AG04450 (cell line): ENCODE measurements at regions of chr9 and their contacts with region 1.

Region 1: DNA sequence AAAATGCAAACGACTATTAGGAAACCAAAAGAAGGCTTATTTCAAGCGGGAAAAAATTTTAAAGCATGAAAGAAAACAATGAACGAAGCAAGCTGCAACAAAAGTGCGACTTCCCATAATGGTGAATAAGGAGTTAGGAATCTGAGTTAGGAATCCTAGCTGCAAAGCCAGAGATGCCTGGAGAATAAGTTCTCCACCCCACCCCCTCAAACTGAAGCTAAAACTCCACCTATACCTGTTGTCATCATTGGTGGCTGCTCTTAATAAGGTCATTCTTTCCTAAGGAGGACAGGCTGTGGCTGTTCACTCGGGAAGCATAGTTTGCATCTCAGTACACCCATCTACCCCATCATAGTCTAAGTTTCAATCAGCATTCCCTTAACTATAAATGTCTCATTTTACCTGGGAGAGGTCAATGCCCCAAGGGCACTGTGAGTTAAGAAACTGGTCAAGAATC is 147.2 kb downstream of the GNAQ start:
- DNase-seq: no peak
- H3K4me3 ChIP-seq: no peak overlapping the region
- H3K27ac ChIP-seq: no peak overlapping the region
- H3K27me3 ChIP-seq: no peaks in the 10 kb centered on the region
- CTCF ChIP-seq: no peak

Region 2: GRCh38 chr9:77374266-77374665 is 510.2 kb before region 1 on chr9:
- CTCF ChIA-PET with region 1: no interaction called
- POLR2A ChIA-PET with region 1: no interaction called
- DNase-seq: no peak
- H3K4me3 ChIP-seq: no peak overlapping the region
- H3K27ac ChIP-seq: no peak overlapping the region
- H3K27me3 ChIP-seq: no peaks in the 10 kb centered on the region
- CTCF ChIP-seq: no peak

Region 3: GRCh38 chr9:77769246-77769645 is 115.2 kb before region 1 on chr9:
- CTCF ChIA-PET with region 1: no interaction called
- POLR2A ChIA-PET with region 1: no interaction called
- DNase-seq: no peak
- H3K4me3 ChIP-seq: no peak overlapping the region
- H3K27ac ChIP-seq: no peak overlapping the region
- H3K27me3 ChIP-seq: no peaks in the 10 kb centered on the region
- CTCF ChIP-seq: no peak

Region 4: DNA sequence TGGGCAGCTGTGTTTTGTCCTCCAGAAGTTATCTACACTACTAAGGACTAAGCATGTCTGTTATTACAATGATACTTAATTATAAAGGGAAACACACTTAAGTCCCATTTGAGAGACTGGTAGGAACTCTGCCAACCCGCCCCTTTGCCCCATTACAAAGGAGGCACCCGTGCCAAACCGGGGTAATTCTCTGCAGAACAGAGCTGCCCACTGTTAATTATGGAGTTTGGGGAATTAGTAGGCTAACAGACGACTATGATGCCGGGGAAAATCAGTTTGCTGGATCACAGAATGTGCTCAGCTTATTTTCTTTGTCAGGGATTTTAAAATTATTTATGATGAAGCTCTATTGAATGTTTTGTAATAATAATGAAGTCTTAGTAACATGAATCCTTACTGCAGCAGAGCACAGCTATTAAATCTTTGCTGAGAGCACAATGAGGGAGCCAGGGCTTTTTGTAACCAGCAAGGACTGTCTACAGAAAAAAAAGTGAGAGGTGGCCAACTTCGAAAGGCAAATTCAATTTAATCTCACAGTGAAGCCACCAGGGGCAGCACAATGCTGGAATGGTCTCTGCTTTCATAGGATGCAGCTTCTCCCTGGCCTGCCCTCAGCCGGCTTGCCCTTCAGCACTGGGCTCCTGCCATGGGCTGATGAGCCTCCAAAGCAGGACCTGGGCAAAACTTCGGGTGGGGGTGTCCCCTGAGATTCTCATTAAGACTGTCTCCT is 12.7 kb after region 1 on chr9:
- CTCF ChIA-PET with region 1: interaction called, 10 read pairs
- POLR2A ChIA-PET with region 1: interaction called, 4 read pairs
- DNase-seq: no peak
- H3K4me3 ChIP-seq: no peak overlapping the region
- H3K27ac ChIP-seq: no peak overlapping the region
- H3K27me3 ChIP-seq: no peaks in the 10 kb centered on the region
- CTCF ChIP-seq: peak; percentile 28